ENCODE measurements at regions of chr2 and their contacts with region 1.

Region 1: GRCh38 chr2:207625018-207625907 is at the start of gene METTL21A:
- DNase-seq: peak; percentile 96
- ATAC-seq: peak; percentile 79
- H3K4me3 Mint-ChIP-seq: peak within 1 kb of the TSS; percentile 94
- H3K27ac Mint-ChIP-seq: peak within 1 kb of the TSS; percentile 98
- H3K4me1 Mint-ChIP-seq: peaks cover 50% of the 10 kb centered on the region
- H3K27me3 Mint-ChIP-seq: no peaks in the 10 kb centered on the region
- CTCF ChIP-seq: no peak
- total RNA-seq, gene METTL21A: 34.2 and 34.3 TPM in 2 replicates

Region 2: DNA sequence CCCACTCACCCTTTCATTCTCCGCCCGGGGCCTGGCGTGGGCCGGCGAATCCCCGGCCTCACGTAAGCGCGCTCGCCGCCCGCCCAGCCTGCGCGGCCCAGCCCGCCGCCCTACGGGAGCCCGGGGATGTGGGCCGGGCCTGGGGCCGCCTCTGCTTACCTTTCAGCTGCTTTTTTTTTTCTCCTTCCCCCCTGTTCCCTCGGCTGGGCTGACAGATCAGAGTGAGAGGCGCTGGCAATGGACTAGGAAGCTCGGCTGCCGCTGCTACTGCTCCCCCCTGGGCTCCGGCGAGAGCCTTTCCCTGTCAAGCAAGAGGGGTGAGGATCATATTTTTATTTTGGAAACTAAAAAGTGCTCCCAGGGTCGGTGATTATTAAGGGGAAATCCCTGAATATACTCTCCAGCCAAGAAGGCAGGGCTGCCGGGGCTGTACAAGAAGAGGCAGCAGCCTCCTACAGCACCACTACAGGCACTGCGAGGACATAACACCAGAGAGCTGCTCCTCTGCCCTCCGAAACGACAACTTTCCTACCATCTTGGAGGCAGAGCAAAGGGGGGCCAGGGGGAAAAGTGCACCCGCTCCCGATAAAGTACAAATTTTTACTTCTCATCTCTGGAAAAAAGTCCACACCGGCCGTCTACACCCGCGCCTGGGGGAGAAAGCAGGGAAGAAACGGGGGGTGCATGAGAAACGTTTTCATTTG is 1539.4 kb before region 1 on chr2 and contains the start of gene INO80D:
- CTCF ChIA-PET with region 1: no interaction called
- POLR2A ChIA-PET with region 1: no interaction called
- intact Hi-C with region 1: loop called (anchors 10 kb)
- DNase-seq: peak; percentile 76
- ATAC-seq: peak; percentile 89
- H3K4me3 Mint-ChIP-seq: peak within 1 kb of the TSS; percentile 99
- H3K27ac Mint-ChIP-seq: peak within 1 kb of the TSS; percentile 100
- H3K4me1 Mint-ChIP-seq: peaks cover 42% of the 10 kb centered on the region
- H3K27me3 Mint-ChIP-seq: no peaks in the 10 kb centered on the region
- CTCF ChIP-seq: no peak
- total RNA-seq, gene INO80D: 52.1 and 53.1 TPM in 2 replicates

Region 3: GRCh38 chr2:207487650-207488311 is 137.5 kb before region 1 on chr2:
- CTCF ChIA-PET with region 1: no interaction called
- POLR2A ChIA-PET with region 1: no interaction called
- intact Hi-C with region 1: no loop called
- DNase-seq: no peak
- ATAC-seq: no peak
- H3K4me3 Mint-ChIP-seq: no peak overlapping the region
- H3K27ac Mint-ChIP-seq: no peak overlapping the region
- H3K4me1 Mint-ChIP-seq: peaks cover 34% of the 10 kb centered on the region
- H3K27me3 Mint-ChIP-seq: no peaks in the 10 kb centered on the region
- CTCF ChIP-seq: no peak

Region 4: GRCh38 chr2:207503234-207503633 is 122.0 kb before region 1 on chr2:
- CTCF ChIA-PET with region 1: no interaction called
- POLR2A ChIA-PET with region 1: interaction called, 14 read pairs
- intact Hi-C with region 1: no loop called
- DNase-seq: no peak
- ATAC-seq: peak; percentile 71
- H3K4me3 Mint-ChIP-seq: peak overlapping the region; percentile 42
- H3K27ac Mint-ChIP-seq: peak overlapping the region; percentile 85
- H3K4me1 Mint-ChIP-seq: peaks cover 83% of the 10 kb centered on the region
- H3K27me3 Mint-ChIP-seq: no peaks in the 10 kb centered on the region
- CTCF ChIP-seq: no peak

Region 5: GRCh38 chr2:207692206-207693065 is 67.2 kb after region 1 on chr2:
- CTCF ChIA-PET with region 1: interaction called, 12 read pairs
- POLR2A ChIA-PET with region 1: interaction called, 3 read pairs
- intact Hi-C with region 1: no loop called
- DNase-seq: no peak
- ATAC-seq: peak; percentile 83
- H3K4me3 Mint-ChIP-seq: no peak overlapping the region
- H3K27ac Mint-ChIP-seq: no peak overlapping the region
- H3K4me1 Mint-ChIP-seq: peaks cover 4% of the 10 kb centered on the region
- H3K27me3 Mint-ChIP-seq: no peaks in the 10 kb centered on the region
- CTCF ChIP-seq: no peak

Region 6: DNA sequence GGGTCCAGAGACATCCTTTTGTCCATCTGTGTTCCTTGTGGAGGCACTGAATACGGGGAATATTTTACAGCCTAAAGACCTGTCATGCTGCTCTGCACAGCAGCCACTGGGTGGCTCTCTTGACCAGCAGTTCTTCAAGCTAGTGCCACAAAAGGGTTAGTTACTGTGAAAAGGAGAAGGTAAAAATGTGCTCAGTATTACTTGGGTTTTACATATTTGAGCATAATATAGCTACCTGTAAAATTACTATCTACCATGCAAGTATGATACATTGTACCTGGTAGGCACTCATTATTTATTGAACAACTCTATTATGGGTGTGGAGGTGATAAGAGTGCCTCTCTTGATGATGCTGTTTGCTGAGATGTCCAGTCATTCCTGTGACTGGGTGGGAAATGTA is 120.9 kb after region 1 on chr2:
- CTCF ChIA-PET with region 1: interaction called, 21 read pairs
- POLR2A ChIA-PET with region 1: interaction called, 5 read pairs
- intact Hi-C with region 1: loop called (anchors 1 kb)
- DNase-seq: peak; percentile 22
- ATAC-seq: peak; percentile 95
- H3K4me3 Mint-ChIP-seq: no peak overlapping the region
- H3K27ac Mint-ChIP-seq: no peak overlapping the region
- H3K4me1 Mint-ChIP-seq: no peaks in the 10 kb centered on the region
- H3K27me3 Mint-ChIP-seq: no peaks in the 10 kb centered on the region
- CTCF ChIP-seq: peak; percentile 46

Region 7: DNA sequence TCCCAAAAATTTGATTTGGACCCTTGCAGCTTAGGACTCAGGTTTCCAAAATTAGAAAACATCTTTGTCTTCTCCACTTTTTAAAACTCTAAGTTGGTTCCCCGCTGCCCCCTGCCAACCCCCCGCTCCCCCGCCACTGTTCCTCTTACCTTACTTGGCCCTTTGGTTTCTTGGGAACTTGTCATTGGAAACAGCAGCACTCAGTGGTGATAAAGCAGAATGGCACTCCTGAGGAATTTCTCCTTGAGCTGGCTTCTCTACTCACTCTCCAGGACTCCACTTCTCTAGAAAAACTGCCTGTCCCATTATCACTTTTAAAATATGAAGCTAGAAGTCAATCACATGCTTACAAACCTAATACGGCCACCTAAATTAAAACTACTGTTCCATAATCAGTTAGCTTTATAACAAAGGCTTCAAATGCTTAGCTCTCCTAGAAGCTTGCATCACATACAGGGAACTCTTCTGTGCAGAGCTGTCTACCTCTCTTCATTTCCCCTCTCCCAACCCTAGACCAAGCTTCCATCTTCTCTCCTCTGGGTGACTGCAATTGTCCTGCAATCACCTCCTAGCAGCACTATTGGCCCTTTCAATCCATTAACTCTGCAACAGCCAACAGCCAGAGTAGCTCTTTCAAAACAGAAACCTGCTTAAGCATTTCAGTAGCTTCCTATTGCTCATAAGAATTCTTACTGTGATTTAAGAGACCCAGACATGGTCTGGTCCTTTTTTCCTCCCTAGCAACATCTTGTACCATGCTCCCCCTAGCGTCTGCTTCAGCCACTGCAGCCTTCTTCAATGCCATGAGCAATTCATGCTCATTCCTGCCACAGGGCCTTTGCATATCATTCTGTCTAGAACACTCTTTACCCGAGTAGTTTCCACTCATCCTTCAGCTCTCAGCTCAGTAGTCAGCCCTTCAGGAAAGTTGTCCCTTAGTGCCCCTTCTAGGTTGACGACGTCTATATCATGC is 415.2 kb after region 1 on chr2:
- CTCF ChIA-PET with region 1: interaction called, 11 read pairs
- POLR2A ChIA-PET with region 1: interaction called, 5 read pairs
- intact Hi-C with region 1: loop called (anchors 2 kb)
- DNase-seq: peak; percentile 41
- ATAC-seq: peak; percentile 91
- H3K4me3 Mint-ChIP-seq: no peak overlapping the region
- H3K27ac Mint-ChIP-seq: no peak overlapping the region
- H3K4me1 Mint-ChIP-seq: no peaks in the 10 kb centered on the region
- H3K27me3 Mint-ChIP-seq: peaks cover 2% of the 10 kb centered on the region
- CTCF ChIP-seq: peak; percentile 47

Region 8: GRCh38 chr2:208315081-208315788 is 690.0 kb after region 1 on chr2:
- CTCF ChIA-PET with region 1: no interaction called
- POLR2A ChIA-PET with region 1: interaction called, 8 read pairs
- intact Hi-C with region 1: loop called (anchors 2 kb)
- DNase-seq: no peak
- ATAC-seq: peak; percentile 54
- H3K4me3 Mint-ChIP-seq: peak overlapping the region; percentile 89
- H3K27ac Mint-ChIP-seq: peak overlapping the region; percentile 93
- H3K4me1 Mint-ChIP-seq: peaks cover 77% of the 10 kb centered on the region
- H3K27me3 Mint-ChIP-seq: no peaks in the 10 kb centered on the region
- CTCF ChIP-seq: no peak

Region 9: DNA sequence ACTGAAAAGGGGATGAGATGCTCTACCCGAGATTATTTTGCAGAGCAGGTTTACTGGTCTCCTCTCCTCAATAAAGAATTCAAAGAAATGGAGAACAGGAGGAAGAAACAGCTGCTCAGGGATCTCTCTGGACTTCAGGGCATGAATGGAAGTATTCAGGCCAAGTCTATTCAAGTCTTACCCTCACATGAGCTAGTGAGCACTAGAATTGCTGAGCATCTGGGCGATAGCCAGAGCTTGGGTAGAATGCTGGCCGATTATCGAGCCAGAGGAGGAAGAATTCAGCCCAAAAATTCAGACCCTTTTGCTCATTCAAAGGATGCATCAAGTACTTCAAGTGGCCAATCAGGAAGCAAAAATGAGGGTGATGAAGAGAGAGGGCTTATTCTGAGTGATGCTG is 700.8 kb after region 1 on chr2:
- CTCF ChIA-PET with region 1: no interaction called
- POLR2A ChIA-PET with region 1: no interaction called
- intact Hi-C with region 1: no loop called
- DNase-seq: no peak
- ATAC-seq: no peak
- H3K4me3 Mint-ChIP-seq: no peak overlapping the region
- H3K27ac Mint-ChIP-seq: no peak overlapping the region
- H3K4me1 Mint-ChIP-seq: peaks cover 48% of the 10 kb centered on the region
- H3K27me3 Mint-ChIP-seq: no peaks in the 10 kb centered on the region
- CTCF ChIP-seq: no peak